ENCODE measurements at regions of chr17 and their contacts with region 1.

Region 1: GRCh38 chr17:49031965-49032928 is 35.1 kb downstream of the IGF2BP1 start:
- DNase-seq: peak; percentile 92 to 93
- H3K4me3 ChIP-seq: no peak overlapping the region
- H3K4me3 Mint-ChIP-seq: peak overlapping the region; percentile 0
- H3K27ac Mint-ChIP-seq: peak overlapping the region; percentile 34
- H3K4me1 ChIP-seq: peaks cover 21% of the 10 kb centered on the region
- H3K4me1 Mint-ChIP-seq: peaks cover 52% of the 10 kb centered on the region
- H3K27me3 ChIP-seq: no peaks in the 10 kb centered on the region
- H3K27me3 Mint-ChIP-seq: no peaks in the 10 kb centered on the region
- CTCF ChIP-seq: peak; percentile 98 to 99

Region 2: DNA sequence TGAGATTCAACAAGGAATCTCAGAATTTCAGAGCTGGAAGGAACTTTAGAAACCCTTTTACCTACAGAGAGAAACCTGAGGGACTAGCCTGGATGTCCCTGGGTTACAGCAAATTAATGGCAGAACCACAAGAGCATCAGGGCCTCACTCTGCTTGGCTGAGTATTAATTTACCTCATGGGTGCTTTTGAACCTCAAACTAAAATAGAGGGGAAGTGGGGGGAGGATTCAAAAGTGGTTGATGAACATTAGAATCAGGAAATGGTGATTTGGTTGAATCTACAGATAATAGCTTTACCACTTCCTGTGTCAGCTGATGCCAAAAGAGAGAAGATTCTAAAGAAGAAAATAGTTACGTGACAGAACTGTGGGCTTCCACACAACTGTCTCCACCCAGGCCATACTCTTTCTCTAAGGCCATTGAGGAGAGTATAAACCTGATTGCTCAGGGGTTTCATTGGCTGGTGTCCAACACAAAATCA is 591.0 kb before region 1 on chr17:
- CTCF ChIA-PET with region 1: no interaction called
- POLR2A ChIA-PET with region 1: no interaction called
- intact Hi-C with region 1: no loop called
- DNase-seq: no peak
- H3K4me3 ChIP-seq: no peak overlapping the region
- H3K4me3 Mint-ChIP-seq: no peak overlapping the region
- H3K27ac Mint-ChIP-seq: no peak overlapping the region
- H3K4me1 ChIP-seq: no peaks in the 10 kb centered on the region
- H3K4me1 Mint-ChIP-seq: no peaks in the 10 kb centered on the region
- H3K27me3 ChIP-seq: 0 out of 2 replicates have a peak, but pooled peaks cover 1% of the 10 kb centered on the region
- H3K27me3 Mint-ChIP-seq: peaks cover 16% of the 10 kb centered on the region
- CTCF ChIP-seq: no peak

Region 3: GRCh38 chr17:48878918-48879898 is 153.0 kb before region 1 on chr17:
- CTCF ChIA-PET with region 1: interaction called, 31 read pairs
- POLR2A ChIA-PET with region 1: no interaction called
- intact Hi-C with region 1: loop called (anchors 1 kb)
- DNase-seq: peak; percentile 86 to 90
- H3K4me3 ChIP-seq: no peak overlapping the region
- H3K4me3 Mint-ChIP-seq: no peak overlapping the region
- H3K27ac Mint-ChIP-seq: no peak overlapping the region
- H3K4me1 ChIP-seq: peaks cover 11% of the 10 kb centered on the region
- H3K4me1 Mint-ChIP-seq: peaks cover 12% of the 10 kb centered on the region
- H3K27me3 ChIP-seq: no peaks in the 10 kb centered on the region
- H3K27me3 Mint-ChIP-seq: no peaks in the 10 kb centered on the region
- CTCF ChIP-seq: peak; percentile 100

Region 4: GRCh38 chr17:48908047-48908843 is 124.0 kb before region 1 on chr17 and contains the start of gene UBE2Z:
- CTCF ChIA-PET with region 1: interaction called, 14 read pairs
- POLR2A ChIA-PET with region 1: interaction called, 3 read pairs
- intact Hi-C with region 1: loop called (anchors 1 kb)
- DNase-seq: peak; percentile 99
- H3K4me3 ChIP-seq: peak within 1 kb of the TSS; percentile 94
- H3K4me3 Mint-ChIP-seq: peak within 1 kb of the TSS; percentile 89
- H3K27ac Mint-ChIP-seq: peak within 1 kb of the TSS; percentile 95
- H3K4me1 ChIP-seq: peaks cover 26% of the 10 kb centered on the region
- H3K4me1 Mint-ChIP-seq: peaks cover 37% of the 10 kb centered on the region
- H3K27me3 ChIP-seq: no peaks in the 10 kb centered on the region
- H3K27me3 Mint-ChIP-seq: no peaks in the 10 kb centered on the region
- CTCF ChIP-seq: peak in 1 of 2 experiments; percentile 68
- total RNA-seq, gene UBE2Z: 182 and 187 TPM in 2 replicates

Region 5: GRCh38 chr17:48954300-48954755 is 77.9 kb before region 1 on chr17:
- CTCF ChIA-PET with region 1: interaction called, 112 read pairs
- POLR2A ChIA-PET with region 1: interaction called, 8 read pairs
- intact Hi-C with region 1: loop called (anchors 1 kb)
- DNase-seq: peak; percentile 89 to 91
- H3K4me3 ChIP-seq: no peak overlapping the region
- H3K4me3 Mint-ChIP-seq: no peak overlapping the region
- H3K27ac Mint-ChIP-seq: peak overlapping the region; percentile 47
- H3K4me1 ChIP-seq: peaks cover 13% of the 10 kb centered on the region
- H3K4me1 Mint-ChIP-seq: peaks cover 10% of the 10 kb centered on the region
- H3K27me3 ChIP-seq: no peaks in the 10 kb centered on the region
- H3K27me3 Mint-ChIP-seq: no peaks in the 10 kb centered on the region
- CTCF ChIP-seq: peak; percentile 94 to 97

Region 6: DNA sequence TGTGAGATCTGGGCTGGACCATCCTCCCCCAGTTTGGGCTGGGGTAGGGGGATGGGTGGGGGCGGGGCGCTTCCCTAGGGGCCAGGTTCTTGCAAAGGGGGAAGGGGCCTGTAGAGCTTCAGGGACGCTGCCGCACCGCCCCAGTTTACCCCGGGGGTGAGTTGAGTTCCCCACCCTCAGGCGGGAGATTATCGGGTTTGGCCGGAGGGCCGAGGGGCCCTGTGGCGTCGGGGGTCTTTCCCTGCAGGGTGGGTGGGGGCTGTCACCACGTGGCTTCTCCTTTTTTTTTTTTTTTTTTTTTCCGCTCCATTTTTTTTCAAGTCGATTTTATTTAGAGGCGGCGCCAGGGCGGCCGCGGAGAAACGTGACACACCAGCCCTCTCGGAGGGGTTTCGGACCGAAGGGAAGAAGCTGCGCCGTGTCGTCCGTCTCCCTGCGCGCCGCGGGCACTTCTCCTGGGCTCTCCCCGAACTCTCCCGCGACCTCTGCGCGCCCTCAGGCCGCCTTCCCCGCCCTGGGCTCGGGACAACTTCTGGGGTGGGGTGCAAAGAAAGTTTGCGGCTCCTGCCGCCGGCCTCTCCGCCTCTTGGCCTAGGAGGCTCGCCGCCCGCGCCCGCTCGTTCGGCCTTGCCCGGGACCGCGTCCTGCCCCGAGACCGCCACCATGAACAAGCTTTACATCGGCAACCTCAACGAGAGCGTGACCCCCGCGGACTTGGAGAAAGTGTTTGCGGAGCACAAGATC is 35.0 kb before region 1 on chr17 and contains the start of gene IGF2BP1:
- CTCF ChIA-PET with region 1: interaction called, 136 read pairs
- POLR2A ChIA-PET with region 1: interaction called, 23 read pairs
- intact Hi-C with region 1: loop called (anchors 1 kb)
- DNase-seq: peak; percentile 93 to 95
- H3K4me3 ChIP-seq: peak within 1 kb of the TSS; percentile 82
- H3K4me3 Mint-ChIP-seq: peak within 1 kb of the TSS; percentile 86
- H3K27ac Mint-ChIP-seq: peak within 1 kb of the TSS; percentile 94
- H3K4me1 ChIP-seq: peaks cover 38% of the 10 kb centered on the region
- H3K4me1 Mint-ChIP-seq: peaks cover 40% of the 10 kb centered on the region
- H3K27me3 ChIP-seq: no peaks in the 10 kb centered on the region
- H3K27me3 Mint-ChIP-seq: no peaks in the 10 kb centered on the region
- CTCF ChIP-seq: no peak
- total RNA-seq, gene IGF2BP1: 583 and 601 TPM in 2 replicates

Region 7: DNA sequence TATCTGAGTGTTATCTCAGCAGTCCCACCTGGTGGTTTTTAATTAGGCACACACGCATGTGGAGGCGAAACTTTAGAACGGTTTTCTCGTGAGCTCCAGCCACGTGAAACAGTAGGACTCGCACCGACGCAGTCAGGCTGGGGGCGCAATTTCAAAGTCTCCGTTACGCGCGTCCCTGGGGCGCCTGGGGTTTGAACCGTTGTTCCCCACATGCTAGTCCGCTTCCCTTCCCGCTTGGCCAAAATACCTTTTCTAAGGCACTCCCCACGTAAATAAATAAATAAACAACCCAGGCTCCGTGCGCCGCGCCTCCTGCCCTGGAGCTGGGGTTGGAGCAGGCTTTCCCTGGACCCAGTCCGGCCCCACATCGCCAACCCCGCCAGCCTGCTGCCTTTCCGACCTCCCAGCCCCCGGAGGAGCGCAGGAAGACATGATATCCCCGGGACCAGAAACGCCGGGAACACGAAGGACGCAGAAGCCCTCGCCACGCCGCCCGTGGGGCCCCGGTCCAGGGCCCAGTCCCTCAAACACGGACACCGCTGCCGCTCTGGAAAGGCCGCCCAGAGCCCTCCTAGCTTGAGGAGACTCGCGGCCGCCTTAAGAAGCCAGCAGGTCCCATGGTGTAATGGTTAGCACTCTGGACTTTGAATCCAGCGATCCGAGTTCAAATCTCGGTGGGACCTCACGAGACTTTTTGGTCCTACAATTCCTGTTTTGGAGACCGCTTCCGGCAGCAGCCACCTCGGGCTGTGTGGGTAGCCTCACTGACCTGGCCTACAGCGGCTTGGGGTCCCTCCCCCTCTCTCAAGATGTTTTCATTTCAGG is 159.9 kb after region 1 on chr17:
- CTCF ChIA-PET with region 1: interaction called, 16 read pairs
- POLR2A ChIA-PET with region 1: no interaction called
- intact Hi-C with region 1: no loop called
- DNase-seq: peak; percentile 92 to 99
- H3K4me3 ChIP-seq: peak overlapping the region; percentile 72
- H3K4me3 Mint-ChIP-seq: peak overlapping the region; percentile 73
- H3K27ac Mint-ChIP-seq: peak overlapping the region; percentile 95
- H3K4me1 ChIP-seq: no peaks in the 10 kb centered on the region; the same call in 1 of the 2 replicates
- H3K4me1 Mint-ChIP-seq: peaks cover 14% of the 10 kb centered on the region
- H3K27me3 ChIP-seq: no peaks in the 10 kb centered on the region
- H3K27me3 Mint-ChIP-seq: no peaks in the 10 kb centered on the region
- CTCF ChIP-seq: peak; percentile 44 to 69